ENCODE measurements at regions of chr2 and their contacts with region 1.

Region 1: DNA sequence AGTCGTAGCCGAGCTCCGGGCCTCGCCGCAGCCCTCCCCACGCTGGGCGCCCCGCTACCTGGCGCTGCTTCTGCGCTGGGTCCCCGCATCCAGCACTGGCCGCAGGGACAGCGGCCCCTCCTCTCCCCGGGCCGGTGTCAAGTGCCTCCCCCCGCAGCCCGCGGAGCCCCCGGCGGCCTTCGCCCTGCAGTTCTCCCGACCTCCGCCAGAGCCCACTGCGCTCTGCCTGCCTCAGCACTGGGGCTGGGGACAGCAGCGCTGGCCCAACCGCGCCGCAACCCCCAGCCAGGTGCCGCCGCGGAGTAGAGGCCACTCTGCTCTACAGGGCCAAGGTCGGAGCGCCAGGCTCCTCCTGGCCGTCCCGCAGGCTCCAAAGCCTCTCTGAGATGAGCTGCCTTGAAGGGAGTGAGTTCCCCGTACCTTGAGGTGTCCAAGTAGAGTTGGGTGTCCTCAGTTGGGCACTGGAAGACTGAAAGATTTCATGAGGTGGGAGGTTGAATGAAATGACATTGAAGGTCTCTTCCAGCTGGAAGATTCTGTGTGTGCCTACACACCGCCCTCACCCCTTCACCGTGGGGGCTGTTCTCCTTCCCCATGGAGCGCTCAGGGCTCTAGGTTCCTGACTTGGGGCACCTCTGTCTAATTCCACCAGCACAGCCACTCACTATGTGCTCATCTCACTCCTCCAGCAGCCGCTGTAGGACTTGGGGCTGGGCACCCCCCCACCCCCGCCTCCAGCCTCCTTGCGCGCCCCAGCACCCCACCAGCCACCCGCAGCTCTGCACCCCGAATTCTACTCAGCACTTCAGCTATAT is 854 bp upstream of the DNMT3A start:
- DNase-seq: peak; percentile 89
- H3K4me3 Mint-ChIP-seq: peak overlapping the region; percentile 70
- H3K27ac Mint-ChIP-seq: peak overlapping the region; percentile 77
- H3K4me1 Mint-ChIP-seq: peaks cover 38% of the 10 kb centered on the region
- H3K27me3 Mint-ChIP-seq: no peaks in the 10 kb centered on the region

Region 2: DNA sequence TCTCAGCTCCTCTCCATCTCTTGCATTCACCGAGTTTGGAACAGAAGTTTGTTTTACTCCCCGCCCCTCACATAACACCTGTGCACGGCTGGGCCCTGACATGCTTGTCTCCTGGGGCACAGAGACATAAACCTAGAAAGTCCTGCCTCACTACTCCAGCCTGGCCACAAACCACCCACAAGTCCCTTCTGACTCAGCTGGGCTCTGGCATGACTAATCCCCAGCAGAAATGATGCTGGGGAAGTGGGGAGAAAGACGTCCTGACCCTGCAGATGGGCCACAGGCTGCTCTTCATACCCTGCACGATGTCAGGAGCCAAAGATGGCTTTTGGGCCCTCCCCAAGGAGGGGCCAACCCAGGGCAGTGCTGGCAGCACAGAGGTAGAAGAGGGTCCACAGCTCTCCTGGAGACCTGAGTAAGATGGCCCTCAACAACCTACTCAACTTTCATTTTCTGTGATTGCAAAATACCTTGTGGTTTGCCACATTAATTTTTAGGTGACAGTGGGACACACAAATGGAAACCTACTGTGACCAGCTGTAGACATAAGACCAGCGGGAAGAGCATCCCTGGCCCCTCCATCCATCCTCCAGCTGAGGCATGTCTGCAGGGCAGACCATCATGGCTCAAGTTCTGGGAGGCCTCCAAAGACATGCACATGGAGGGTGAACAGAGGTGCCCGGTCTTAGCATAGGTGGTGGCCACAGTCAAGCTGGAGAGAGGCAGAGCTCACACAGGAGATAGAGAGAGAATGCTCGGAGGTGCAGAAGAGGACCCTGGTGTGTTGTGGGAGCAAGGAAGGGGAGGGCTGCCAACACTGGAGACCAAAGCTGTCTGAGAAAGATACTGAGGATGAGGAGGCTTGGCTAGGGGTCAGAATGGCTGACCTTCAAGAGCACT is 40.9 kb before region 1 on chr2:
- CTCF ChIA-PET with region 1: interaction called, 3 read pairs
- POLR2A ChIA-PET with region 1: no interaction called
- intact Hi-C with region 1: loop called (anchors 5 kb)
- DNase-seq: peak; percentile 94
- H3K4me3 Mint-ChIP-seq: no peak overlapping the region
- H3K27ac Mint-ChIP-seq: peak overlapping the region; percentile 47
- H3K4me1 Mint-ChIP-seq: peaks cover 58% of the 10 kb centered on the region
- H3K27me3 Mint-ChIP-seq: no peaks in the 10 kb centered on the region

Region 3: DNA sequence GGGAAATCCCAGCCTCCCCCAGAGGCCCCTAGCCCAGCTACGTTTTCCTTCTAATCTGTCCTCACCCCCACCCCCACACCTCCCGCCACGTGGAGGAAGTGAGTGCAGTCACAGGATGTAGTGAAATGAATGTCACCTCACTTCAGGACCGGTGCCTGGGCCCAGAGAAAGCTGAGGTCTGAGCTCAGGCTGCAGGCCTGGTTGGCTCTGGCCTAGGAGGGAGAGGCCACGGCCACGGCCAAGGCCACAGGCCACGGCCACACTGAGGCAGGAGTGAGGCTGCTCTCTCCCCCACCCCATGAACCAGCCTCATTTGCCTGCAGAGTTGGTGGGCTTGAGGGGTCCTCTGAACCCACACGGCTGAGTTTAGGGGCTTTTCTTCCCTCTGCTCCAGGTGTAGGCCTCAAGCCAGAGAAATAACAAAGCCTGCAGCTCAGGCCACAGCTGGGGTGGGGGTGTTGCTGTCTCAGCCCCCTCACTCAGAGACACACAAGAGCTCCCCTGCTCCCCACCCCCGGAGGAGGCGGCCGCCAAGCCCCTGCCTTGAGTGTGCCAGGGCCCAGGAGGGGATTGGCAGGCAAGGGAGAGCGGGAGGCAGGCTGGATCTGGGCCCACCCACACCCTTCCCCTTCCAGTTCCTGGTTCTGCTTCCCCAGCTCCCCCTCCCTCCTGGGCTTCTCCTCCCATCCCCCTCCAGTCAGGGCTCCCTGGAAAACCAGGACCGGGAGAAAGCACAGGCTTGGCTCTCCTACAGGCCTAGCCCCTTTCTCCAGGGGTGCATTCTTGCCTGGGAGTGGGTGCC is 27.9 kb before region 1 on chr2:
- CTCF ChIA-PET with region 1: interaction called, 6 read pairs
- POLR2A ChIA-PET with region 1: interaction called, 9 read pairs
- intact Hi-C with region 1: loop called (anchors 2 kb)
- DNase-seq: peak; percentile 96
- H3K4me3 Mint-ChIP-seq: peak overlapping the region; percentile 90
- H3K27ac Mint-ChIP-seq: peak overlapping the region; percentile 95
- H3K4me1 Mint-ChIP-seq: peaks cover 61% of the 10 kb centered on the region
- H3K27me3 Mint-ChIP-seq: no peaks in the 10 kb centered on the region

Region 4: DNA sequence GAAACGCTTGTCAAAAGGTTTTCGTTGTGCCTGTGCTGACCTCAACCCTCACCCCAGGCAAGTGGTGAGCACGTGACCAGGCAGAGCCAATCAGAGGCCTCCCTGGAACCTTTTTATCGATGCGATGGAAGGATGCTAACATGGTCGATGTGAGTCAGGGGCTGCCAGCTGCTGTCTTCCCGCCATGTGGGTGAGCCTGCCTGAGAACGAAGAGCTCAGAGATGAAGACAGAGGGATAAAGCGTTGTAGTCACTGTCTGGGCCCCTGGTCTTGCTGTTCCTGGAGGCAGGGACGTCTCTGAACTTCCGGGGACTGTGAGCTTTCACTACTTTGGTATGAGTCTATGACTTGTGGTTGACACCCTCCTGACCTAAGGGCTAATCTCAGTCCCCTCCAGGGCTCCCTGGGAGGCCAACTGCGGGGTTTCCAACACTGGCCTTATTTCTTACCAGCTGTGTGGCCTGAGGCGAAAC is 19.5 kb before region 1 on chr2:
- CTCF ChIA-PET with region 1: interaction called, 8 read pairs
- POLR2A ChIA-PET with region 1: no interaction called
- intact Hi-C with region 1: loop called (anchors 2 kb)
- DNase-seq: peak; percentile 89
- H3K4me3 Mint-ChIP-seq: peak overlapping the region; percentile 68
- H3K27ac Mint-ChIP-seq: peak overlapping the region; percentile 92
- H3K4me1 Mint-ChIP-seq: peaks cover 54% of the 10 kb centered on the region
- H3K27me3 Mint-ChIP-seq: no peaks in the 10 kb centered on the region

Measured in activated CD4-positive, alpha-beta memory T cell treated with anti-CD3 and anti-CD28 coated beads for 36 hours (primary cell).